ENCODE measurements at regions of chr11 and their contacts with region 1.

Region 1: GRCh38 chr11:134792044-134792443 is 380.0 kb upstream of the B3GAT1 start:
- DNase-seq: no peak
- H3K4me3 ChIP-seq: no peak overlapping the region
- H3K27ac ChIP-seq: no peak overlapping the region
- H3K4me1 ChIP-seq: no peaks in the 10 kb centered on the region
- H3K27me3 ChIP-seq: no peaks in the 10 kb centered on the region
- CTCF ChIP-seq: no peak
- POLR2A ChIP-seq: no peak

Region 2: DNA sequence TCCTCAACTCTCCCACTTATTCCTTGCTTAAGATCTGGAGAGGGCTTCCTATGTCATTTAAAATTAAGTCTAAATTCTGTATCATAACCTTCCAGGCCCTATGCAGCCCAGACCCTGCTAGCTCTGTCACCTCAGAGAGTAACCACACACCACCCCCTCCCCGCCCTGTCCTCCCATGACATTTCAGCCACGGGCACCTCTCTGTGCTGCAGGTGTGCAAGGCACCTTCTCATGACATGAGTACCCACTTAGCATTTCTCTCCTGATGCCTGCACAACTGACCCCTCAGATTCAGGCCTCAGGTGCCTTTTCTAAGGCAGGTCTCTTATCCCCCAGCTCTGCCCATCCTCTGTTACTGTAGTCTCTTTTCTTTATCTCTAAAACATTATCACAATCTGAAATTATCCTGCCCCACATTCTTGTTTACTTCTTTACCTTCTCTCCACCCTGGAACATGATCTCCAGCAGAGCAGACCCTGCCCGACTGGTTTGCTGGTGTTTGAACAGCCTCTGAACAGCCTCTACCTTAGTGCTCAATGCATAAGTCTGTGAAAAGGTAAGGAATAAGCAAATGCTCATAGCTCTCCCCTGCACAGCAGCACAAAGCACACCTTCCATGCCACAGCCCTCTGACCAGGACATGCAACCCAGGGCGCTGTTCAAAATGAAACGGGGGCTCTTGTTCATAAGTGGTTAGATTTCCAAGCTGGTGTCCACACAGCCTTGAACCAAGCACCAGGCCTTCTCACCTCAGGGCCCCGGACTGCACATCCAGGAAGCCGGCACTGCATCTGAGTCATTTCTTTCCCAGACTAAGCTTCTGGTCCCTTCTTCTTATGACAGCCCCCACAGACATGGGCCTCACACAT is 183.8 kb before region 1 on chr11:
- intact Hi-C with region 1: loop called (anchors 5 kb)
- DNase-seq: no peak
- H3K4me3 ChIP-seq: no peak overlapping the region
- H3K27ac ChIP-seq: no peak overlapping the region
- H3K4me1 ChIP-seq: no peaks in the 10 kb centered on the region
- H3K27me3 ChIP-seq: peaks cover 0 to 14% of the 10 kb centered on the region in 2 donors
- CTCF ChIP-seq: no peak
- POLR2A ChIP-seq: no peak

Region 3: DNA sequence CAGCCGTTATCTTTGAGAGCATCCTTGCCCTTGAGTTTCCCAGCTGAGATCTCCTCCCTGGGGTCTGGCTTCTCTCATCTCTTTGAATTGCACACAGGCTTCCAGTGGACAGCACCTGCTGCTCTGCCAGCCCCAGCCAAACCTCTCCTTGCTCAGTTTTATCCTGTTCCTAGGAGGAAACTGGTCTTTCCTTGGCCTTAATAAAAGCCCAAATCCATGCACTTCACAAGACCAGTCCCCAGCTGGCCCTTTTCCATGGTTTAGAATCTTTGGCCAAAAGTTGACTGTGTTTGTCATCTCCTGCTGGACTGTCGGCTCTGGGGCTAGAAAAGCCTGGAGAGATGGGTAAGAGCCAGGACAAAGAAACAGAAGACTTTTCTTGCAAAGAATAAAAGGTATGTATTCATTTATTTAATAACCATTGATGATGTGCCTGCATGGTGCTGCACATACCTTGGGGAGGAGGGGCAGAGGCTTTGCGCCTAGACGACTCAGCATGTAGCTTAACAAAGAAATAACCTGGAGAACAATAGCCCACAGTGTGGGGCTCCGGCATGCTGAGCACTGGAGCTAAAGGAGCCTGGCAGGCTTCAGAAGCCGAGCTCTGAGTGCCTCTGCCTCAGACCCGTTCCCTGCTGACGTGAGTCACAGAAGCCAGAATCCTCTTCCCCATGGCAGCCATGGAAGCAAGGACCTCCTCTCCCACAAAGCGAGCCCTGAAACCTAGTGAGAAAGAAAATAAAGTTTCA is 60.7 kb before region 1 on chr11:
- intact Hi-C with region 1: loop called (anchors 2 kb)
- DNase-seq: peak in 1 of 2 donors; percentile 52
- H3K4me3 ChIP-seq: no peak overlapping the region
- H3K27ac ChIP-seq: peak overlapping the region; percentile 51 to 61
- H3K4me1 ChIP-seq: no peaks in the 10 kb centered on the region
- H3K27me3 ChIP-seq: peaks cover 0 to 3% of the 10 kb centered on the region in 2 donors
- CTCF ChIP-seq: no peak
- POLR2A ChIP-seq: no peak